PC-3 (cell line): ENCODE measurements at regions of chr13 and their contacts with region 1.

Region 1: DNA sequence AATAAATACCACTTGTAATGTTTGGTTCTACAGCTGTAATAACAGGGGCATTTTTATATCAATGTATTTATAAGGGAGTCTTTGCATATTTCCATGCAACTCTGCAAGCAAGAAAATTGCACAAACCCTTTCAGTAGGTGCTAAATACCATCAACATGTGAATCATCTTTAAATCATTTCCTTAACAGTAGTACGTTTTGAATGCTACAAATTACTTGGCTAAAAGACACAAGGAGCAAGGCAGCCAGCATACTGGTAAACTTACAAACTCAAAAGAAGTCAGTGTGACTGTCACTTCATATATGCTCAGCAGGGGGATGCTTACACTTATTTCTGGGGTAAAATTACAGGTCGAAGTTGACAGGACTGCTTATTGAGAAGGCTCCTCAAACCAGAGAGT is 402.4 kb downstream of the EFNB2 start:
- DNase-seq: peak; percentile 43
- ATAC-seq: peak; percentile 38
- H3K4me3 ChIP-seq: no peak overlapping the region
- H3K27ac ChIP-seq: no peak overlapping the region
- H3K4me1 ChIP-seq: peaks cover 41% of the 10 kb centered on the region
- H3K27me3 ChIP-seq: no peaks in the 10 kb centered on the region
- CTCF ChIP-seq: no peak

Region 2: DNA sequence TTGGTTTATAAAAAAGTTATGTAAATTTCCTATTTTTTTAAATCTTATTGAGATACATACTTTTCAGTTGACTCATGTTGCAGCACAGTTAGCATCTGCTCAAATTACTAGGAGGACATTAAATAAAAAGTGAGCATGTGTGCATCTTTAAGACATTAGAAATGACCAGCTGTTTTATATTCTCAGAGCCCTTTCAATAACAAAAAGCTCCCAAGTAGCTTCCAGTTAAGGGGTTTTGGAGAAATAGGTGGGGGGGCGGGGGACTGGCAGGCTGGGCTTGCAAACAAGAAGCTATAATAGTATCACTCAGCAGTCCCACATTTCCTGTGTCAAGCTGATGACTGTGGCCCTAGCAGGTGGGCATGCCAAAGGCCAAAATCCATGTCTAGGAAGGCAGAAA is 1353.7 kb before region 1 on chr13:
- CTCF ChIA-PET with region 1: no interaction called
- POLR2A ChIA-PET with region 1: interaction called, 19 read pairs
- intact Hi-C with region 1: no loop called
- DNase-seq: peak; percentile 36
- ATAC-seq: peak; percentile 83
- H3K4me3 ChIP-seq: no peak overlapping the region
- H3K27ac ChIP-seq: no peak overlapping the region
- H3K4me1 ChIP-seq: peaks cover 10% of the 10 kb centered on the region; the same call in 1 of the 2 replicates
- H3K27me3 ChIP-seq: no peaks in the 10 kb centered on the region
- CTCF ChIP-seq: no peak

Region 3: GRCh38 chr13:106096661-106097092 is 36.3 kb before region 1 on chr13:
- CTCF ChIA-PET with region 1: no interaction called
- POLR2A ChIA-PET with region 1: no interaction called
- intact Hi-C with region 1: loop called (anchors 1 kb)
- DNase-seq: peak; percentile 90
- ATAC-seq: peak; percentile 72
- H3K4me3 ChIP-seq: peak overlapping the region; percentile 34; the same call in 1 of the 2 replicates
- H3K27ac ChIP-seq: peak overlapping the region; percentile 95
- H3K4me1 ChIP-seq: peaks cover 65% of the 10 kb centered on the region
- H3K27me3 ChIP-seq: no peaks in the 10 kb centered on the region
- CTCF ChIP-seq: no peak

Region 4: DNA sequence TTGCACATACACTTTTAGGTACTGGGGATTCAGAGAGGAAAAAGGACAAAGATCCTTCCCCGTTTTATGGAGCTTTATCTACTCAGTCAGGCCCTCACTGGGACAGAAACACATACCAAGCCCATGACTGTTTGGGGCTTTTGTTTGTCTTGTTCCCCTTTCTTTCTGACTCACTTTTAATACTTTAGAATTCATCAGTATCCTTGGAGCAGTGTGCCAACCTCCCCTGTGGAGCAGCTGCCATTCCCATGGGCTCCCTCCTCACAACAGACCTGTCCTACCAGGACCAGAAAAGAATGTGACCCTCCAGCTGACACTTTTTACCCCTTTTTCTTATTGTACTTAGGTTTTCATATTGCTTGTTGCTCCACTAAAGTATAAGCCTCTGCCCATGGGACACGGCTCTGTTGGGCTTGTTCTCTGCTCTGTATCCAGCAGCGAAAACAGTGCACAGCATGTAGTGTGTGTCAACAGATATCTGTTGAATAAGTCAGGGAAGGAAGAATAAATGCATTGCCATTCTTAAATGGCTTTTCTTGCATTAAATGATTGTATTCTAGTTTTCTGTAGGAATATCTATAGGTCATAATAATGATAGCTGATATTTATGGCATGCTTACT is 28.6 kb before region 1 on chr13:
- CTCF ChIA-PET with region 1: no interaction called
- POLR2A ChIA-PET with region 1: no interaction called
- intact Hi-C with region 1: loop called (anchors 1 kb)
- DNase-seq: peak; percentile 91
- ATAC-seq: peak; percentile 75
- H3K4me3 ChIP-seq: peak overlapping the region; percentile 46; the same call in 1 of the 2 replicates
- H3K27ac ChIP-seq: peak overlapping the region; percentile 100
- H3K4me1 ChIP-seq: peaks cover 71% of the 10 kb centered on the region
- H3K27me3 ChIP-seq: no peaks in the 10 kb centered on the region
- CTCF ChIP-seq: no peak

Region 5: DNA sequence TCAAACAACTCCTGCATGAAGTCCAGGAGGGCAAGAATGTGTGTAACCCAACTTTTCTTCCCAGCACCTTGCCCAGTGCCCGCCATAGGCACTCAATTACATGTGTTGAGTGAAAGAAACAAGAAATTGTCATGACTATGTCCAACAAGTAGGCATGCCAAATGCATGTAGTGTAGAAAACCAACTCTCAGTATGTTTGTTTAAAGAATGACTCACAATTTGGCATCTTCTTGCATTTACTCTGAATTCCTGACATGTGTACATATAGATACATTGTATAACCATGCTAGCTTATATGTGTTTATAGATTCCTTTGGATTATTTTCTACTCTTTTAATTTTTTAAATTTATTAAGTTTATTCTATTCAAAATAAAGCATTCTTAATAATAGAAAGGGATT is 97.4 kb after region 1 on chr13:
- CTCF ChIA-PET with region 1: no interaction called
- POLR2A ChIA-PET with region 1: no interaction called
- intact Hi-C with region 1: loop called (anchors 10 kb)
- DNase-seq: peak; percentile 84
- ATAC-seq: peak; percentile 96
- H3K4me3 ChIP-seq: no peak overlapping the region
- H3K27ac ChIP-seq: no peak overlapping the region
- H3K4me1 ChIP-seq: peaks cover 5% of the 10 kb centered on the region; the same call in 1 of the 2 replicates
- H3K27me3 ChIP-seq: no peaks in the 10 kb centered on the region
- CTCF ChIP-seq: no peak

Region 6: GRCh38 chr13:106471957-106472543 is 339.0 kb after region 1 on chr13:
- CTCF ChIA-PET with region 1: no interaction called
- POLR2A ChIA-PET with region 1: no interaction called
- intact Hi-C with region 1: loop called (anchors 1 kb)
- DNase-seq: peak; percentile 92
- ATAC-seq: peak; percentile 94
- H3K4me3 ChIP-seq: peak overlapping the region; percentile 44; the same call in 1 of the 2 replicates
- H3K27ac ChIP-seq: peak overlapping the region; percentile 86
- H3K4me1 ChIP-seq: peaks cover 44% of the 10 kb centered on the region
- H3K27me3 ChIP-seq: no peaks in the 10 kb centered on the region
- CTCF ChIP-seq: no peak

Region 7: GRCh38 chr13:106520205-106521054 is 387.4 kb after region 1 on chr13:
- CTCF ChIA-PET with region 1: no interaction called
- POLR2A ChIA-PET with region 1: no interaction called
- intact Hi-C with region 1: loop called (anchors 1 kb)
- DNase-seq: peak; percentile 16
- ATAC-seq: no peak
- H3K4me3 ChIP-seq: peak overlapping the region; percentile 34; the same call in 1 of the 2 replicates
- H3K27ac ChIP-seq: peak overlapping the region; percentile 64
- H3K4me1 ChIP-seq: peaks cover 43% of the 10 kb centered on the region
- H3K27me3 ChIP-seq: no peaks in the 10 kb centered on the region
- CTCF ChIP-seq: peak; percentile 46; the same call in 1 of the 2 replicates